ENCODE measurements at regions of chr22 and their contacts with region 1.

Region 1: DNA sequence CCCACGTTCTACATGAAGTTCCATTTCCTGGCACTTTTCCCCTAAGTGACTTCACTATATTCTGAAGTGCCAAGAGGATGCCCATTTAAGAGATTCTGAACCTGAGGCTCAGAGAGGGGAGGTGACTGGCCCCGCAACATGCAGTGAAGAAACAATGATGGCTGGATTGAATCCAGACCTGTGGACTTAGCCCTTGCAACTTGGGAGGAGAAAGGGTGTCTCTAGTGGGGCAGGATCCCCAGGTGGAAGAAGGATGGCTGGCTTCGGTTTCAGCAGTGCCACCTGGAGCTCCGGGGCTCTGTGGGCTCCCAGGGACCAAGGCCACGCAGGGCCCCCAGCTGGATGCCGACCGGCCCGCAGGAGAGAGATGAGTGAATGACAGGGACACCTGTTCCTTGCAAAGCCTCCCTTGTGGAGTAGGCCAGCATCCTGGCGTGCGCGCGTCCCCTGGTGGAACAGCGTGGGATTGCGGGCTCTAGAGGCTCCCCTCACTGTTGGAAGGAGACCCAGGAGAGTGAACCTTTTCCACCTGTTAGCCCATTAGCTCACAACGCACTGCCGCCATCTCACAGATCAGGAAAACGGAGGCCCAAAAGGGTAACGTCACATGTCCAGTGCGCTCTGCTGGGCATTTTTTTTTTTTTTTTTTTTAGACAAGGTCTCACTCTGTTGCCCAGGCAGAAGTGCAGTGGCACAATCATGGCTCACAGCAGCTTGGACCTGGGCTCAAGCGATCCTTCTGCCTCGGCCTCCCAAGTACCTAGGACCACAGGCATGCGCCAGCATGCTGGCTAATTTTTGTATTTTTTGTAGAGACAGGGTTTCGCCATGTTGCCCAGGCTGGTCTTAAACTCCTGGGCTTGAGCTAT is 104.7 kb downstream of the KIAA1671 start:
- DNase-seq: peak; percentile 71
- CTCF ChIP-seq: peak; percentile 84

Region 2: GRCh38 chr22:24883432-24883831 is 173.8 kb before region 1 on chr22:
- CTCF ChIA-PET with region 1: no interaction called
- POLR2A ChIA-PET with region 1: no interaction called
- DNase-seq: no peak
- CTCF ChIP-seq: no peak

Region 3: DNA sequence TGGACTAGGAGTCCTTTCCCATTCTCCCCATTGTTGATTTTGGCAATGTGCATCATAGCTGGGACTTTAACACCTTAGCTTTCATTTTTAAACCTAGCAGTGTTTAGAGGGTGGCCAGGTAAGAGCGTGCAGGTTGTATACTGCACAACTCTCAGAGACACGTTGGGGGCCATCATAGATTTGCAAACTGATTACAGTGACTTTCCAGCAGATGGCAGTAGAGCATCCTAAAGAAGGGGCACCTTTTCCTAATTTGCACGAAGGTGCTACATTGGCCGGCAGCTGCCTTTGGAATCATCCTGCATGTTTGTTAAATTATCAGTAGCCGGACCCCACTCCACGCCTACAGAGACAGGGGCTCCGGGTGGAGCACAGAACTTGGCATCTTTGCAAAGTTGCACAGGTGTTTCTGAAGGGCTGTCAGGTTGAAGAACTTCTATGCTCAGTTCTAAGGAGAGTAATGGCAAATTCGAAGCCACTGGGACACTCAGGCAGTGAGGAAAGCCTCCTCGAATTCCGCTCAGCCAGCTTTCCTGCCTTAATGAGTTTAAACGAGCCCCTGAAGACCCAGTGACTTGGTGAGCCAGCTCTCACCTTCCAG is 118.4 kb before region 1 on chr22:
- CTCF ChIA-PET with region 1: interaction called, 75 read pairs
- POLR2A ChIA-PET with region 1: no interaction called
- DNase-seq: peak; percentile 73
- CTCF ChIP-seq: peak; percentile 52

Region 4: GRCh38 chr22:25076336-25076735 is 19.1 kb after region 1 on chr22:
- CTCF ChIA-PET with region 1: interaction called, 10 read pairs
- POLR2A ChIA-PET with region 1: no interaction called
- DNase-seq: no peak
- CTCF ChIP-seq: no peak

Region 5: GRCh38 chr22:25193548-25193947 is 136.3 kb after region 1 on chr22:
- CTCF ChIA-PET with region 1: no interaction called
- POLR2A ChIA-PET with region 1: no interaction called
- DNase-seq: no peak
- CTCF ChIP-seq: no peak

Measured in GM10248 (cell line).